GM13976 (cell line): ENCODE measurements at regions of chr17 and their contacts with region 1.

Region 1: GRCh38 chr17:44400226-44400847 is 10.9 kb upstream of the ITGA2B start:
- DNase-seq: no peak
- CTCF ChIP-seq: peak; percentile 21

Region 2: GRCh38 chr17:44503147-44504029 is 103.1 kb after region 1 on chr17 and contains the start of gene GPATCH8:
- in situ Hi-C with region 1: loop called (anchors 10 kb)
- DNase-seq: peak; percentile 100
- CTCF ChIP-seq: no peak